ENCODE measurements at regions of chr1 and their contacts with region 1.

Region 1: GRCh38 chr1:108746372-108747205 is at the start of gene STXBP3:
- DNase-seq: peak; percentile 100
- ATAC-seq: peak; percentile 94
- H3K4me3 Mint-ChIP-seq: peak within 1 kb of the TSS; percentile 96
- H3K27ac Mint-ChIP-seq: peak within 1 kb of the TSS; percentile 99
- H3K4me1 Mint-ChIP-seq: peaks cover 29% of the 10 kb centered on the region
- H3K27me3 Mint-ChIP-seq: no peaks in the 10 kb centered on the region
- total RNA-seq, gene STXBP3: 38.9 to 39.3 TPM

Region 2: GRCh38 chr1:108512239-108512981 is 234.2 kb before region 1 on chr1:
- CTCF ChIA-PET with region 1: no interaction called
- POLR2A ChIA-PET with region 1: no interaction called
- intact Hi-C with region 1: loop called in 1 of 2 experiments (anchors 2 kb)
- DNase-seq: no peak
- ATAC-seq: no peak
- H3K4me3 Mint-ChIP-seq: no peak overlapping the region
- H3K27ac Mint-ChIP-seq: no peak overlapping the region
- H3K4me1 Mint-ChIP-seq: no peaks in the 10 kb centered on the region
- H3K27me3 Mint-ChIP-seq: peaks cover 22% of the 10 kb centered on the region

Region 3: DNA sequence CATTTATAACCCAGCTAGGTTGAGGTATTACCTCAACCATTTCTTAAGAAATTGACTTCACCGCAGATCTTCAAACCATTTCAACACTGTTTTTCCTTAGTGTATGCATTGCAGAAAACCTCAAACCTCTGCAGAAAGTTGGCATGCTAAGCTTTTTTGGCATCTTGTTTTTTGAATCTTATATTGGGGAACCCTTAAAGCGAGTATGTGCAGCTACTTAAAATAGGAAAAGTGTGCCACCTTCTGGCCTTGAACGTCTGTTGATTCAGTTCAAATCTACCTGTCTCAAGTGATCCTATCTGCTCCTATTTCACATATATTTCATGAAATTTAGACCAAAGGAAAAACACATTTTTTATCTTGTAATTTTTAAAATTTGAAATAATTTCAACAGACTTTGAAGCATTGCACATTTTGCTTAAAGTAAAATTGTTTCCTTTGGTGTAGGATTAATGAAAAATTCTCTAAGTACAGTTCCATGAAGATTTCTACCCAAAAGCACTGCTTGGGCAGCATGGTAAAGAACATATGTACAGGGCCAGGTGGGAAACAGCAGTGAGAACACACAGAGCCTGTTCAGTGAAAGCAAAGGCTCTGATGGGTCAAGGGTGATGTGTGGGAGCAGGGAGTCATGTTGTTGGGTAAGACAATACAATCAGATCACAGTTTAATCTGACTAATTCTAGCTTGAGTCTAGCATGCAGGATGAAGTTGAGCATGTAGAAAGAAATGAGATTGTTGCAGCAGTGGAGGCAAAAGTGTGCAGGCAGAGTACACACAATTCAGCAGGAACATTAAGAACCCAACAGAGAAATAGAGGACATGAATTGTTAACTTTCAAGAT is 102.9 kb before region 1 on chr1:
- CTCF ChIA-PET with region 1: no interaction called
- POLR2A ChIA-PET with region 1: no interaction called
- intact Hi-C with region 1: loop called in 1 of 2 experiments (anchors 5 kb)
- DNase-seq: peak; percentile 64
- ATAC-seq: peak; percentile 47
- H3K4me3 Mint-ChIP-seq: no peak overlapping the region
- H3K27ac Mint-ChIP-seq: peak overlapping the region; percentile 72
- H3K4me1 Mint-ChIP-seq: peaks cover 71% of the 10 kb centered on the region
- H3K27me3 Mint-ChIP-seq: no peaks in the 10 kb centered on the region

Region 4: DNA sequence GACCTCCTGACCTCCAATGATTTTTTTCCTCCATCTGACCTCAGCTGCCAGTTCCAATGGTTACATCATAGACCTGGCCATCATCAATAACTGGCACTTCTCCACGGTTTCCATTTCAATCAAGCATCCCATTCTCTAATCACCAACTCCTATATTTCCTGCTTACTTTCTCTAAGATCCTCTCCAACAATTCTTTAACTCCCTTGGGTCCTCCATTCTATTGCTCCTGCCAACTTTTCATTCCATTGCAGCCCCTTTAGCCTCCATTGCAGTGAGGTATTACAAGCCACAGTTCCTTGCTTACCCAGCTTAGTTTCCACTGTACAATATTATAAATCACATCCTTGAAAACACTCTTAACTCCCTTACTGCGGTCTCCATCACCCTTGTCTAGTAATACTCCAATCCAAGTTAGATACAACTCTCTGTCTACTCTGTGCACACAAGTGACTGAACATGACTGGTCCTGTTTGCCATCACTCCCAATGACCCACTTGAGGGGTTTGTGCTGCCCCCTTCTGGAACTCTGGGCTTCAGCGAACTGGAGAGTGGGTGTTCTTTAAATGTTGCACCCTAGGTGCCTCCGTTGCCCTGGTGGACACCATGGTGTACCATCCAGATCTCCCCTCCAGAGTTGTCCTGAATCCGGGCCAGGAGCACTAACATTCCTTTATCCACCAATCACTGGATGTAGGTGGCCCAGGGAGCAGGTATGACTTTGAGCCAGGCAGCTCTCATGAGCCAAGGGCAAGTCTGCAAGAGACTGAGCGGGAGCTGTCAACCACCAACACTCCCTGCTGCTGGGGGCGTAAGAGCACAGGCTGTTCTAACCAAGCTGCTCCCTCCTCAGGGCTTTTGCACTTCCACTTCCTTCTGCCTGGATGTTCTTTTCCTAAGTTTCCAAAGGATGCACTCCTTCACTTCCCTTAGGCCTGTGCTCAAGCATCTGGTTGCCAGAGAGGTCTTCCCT is 37.6 kb before region 1 on chr1:
- CTCF ChIA-PET with region 1: interaction called, 3 read pairs
- POLR2A ChIA-PET with region 1: no interaction called
- intact Hi-C with region 1: loop called (anchors 1 to 2 kb)
- DNase-seq: peak; percentile 78
- ATAC-seq: peak; percentile 86
- H3K4me3 Mint-ChIP-seq: no peak overlapping the region
- H3K27ac Mint-ChIP-seq: no peak overlapping the region
- H3K4me1 Mint-ChIP-seq: peaks cover 25% of the 10 kb centered on the region
- H3K27me3 Mint-ChIP-seq: no peaks in the 10 kb centered on the region

Region 5: GRCh38 chr1:108963052-108963686 is 216.6 kb after region 1 on chr1 and contains the start of gene CLCC1:
- CTCF ChIA-PET with region 1: no interaction called
- POLR2A ChIA-PET with region 1: no interaction called
- intact Hi-C with region 1: loop called in 1 of 2 experiments (anchors 2 kb)
- DNase-seq: peak; percentile 96
- ATAC-seq: peak; percentile 97
- H3K4me3 Mint-ChIP-seq: peak within 1 kb of the TSS; percentile 81
- H3K27ac Mint-ChIP-seq: peak within 1 kb of the TSS; percentile 91
- H3K4me1 Mint-ChIP-seq: peaks cover 26% of the 10 kb centered on the region
- H3K27me3 Mint-ChIP-seq: no peaks in the 10 kb centered on the region
- total RNA-seq, gene CLCC1: 15.7 to 17.1 TPM

Region 6: DNA sequence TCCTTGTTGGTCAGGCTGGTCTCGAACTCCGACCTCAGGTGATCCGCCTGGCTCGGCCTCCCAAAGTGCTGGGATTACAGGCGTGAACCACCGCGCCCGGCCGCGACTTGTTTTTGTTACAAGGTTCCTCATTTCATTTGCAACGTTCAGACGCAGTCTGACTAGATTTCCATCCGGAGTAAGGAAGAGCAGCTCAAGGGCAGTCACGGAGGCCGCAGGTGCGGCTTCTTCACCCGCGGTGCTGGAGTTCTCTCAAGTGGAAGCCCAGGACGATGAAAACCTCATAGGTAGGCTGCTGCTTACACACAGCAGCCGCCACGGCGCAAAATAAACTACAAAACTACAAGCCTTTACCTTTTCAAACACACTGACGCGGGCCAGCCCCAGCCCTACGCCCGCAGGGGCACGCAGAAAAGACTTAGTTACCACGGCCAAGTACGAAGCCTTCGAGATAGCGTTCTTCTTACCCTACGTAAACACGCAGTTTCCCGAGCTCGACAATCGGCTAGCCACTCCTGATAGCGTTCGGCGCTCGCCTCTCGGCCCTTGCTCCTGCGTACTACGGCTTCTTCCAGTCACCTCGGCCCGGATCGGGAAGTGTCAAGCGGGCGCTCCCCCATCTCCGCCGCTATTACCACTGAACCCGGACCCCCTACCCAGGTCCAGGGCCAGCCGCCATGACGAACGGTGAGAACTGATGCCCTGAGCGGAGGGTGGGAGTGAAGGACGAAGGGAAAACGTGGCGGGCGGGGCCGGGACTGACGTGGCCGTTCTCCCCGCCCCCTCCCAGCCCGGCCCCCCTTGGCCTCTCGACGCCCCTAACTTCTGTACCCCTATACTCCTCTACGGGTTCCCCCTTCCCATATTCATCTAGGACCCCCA is 343.8 kb after region 1 on chr1 and contains the start of gene TMEM167B:
- CTCF ChIA-PET with region 1: no interaction called
- POLR2A ChIA-PET with region 1: no interaction called
- intact Hi-C with region 1: loop called (anchors 2 to 5 kb)
- DNase-seq: peak; percentile 95
- ATAC-seq: peak; percentile 88
- H3K4me3 Mint-ChIP-seq: peak within 1 kb of the TSS; percentile 85
- H3K27ac Mint-ChIP-seq: peak within 1 kb of the TSS; percentile 84
- H3K4me1 Mint-ChIP-seq: peaks cover 30% of the 10 kb centered on the region
- H3K27me3 Mint-ChIP-seq: no peaks in the 10 kb centered on the region
- total RNA-seq, gene TMEM167B: 26.8 to 28.4 TPM

Region 7: DNA sequence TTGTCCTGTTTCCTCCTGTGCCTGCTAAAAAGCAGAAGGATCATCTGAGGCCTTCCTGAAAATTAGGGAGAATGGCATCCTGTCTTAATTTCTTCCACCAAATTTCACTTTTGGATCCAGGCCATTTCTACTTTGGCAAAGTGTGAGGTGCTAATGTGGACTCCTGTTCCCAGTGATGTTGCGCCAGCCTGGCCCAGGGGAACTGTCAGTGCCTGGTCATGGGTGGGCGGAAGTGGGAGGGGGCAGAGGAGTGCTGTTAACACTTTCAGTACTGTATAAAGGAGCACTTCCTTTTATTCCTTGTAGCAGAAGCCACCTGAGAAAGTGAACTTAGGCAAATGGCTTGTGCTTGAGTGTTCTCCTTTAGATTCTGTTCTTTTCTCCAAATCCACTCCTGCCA is 387.2 kb after region 1 on chr1:
- CTCF ChIA-PET with region 1: no interaction called
- POLR2A ChIA-PET with region 1: no interaction called
- intact Hi-C with region 1: no loop called
- DNase-seq: peak; percentile 38
- ATAC-seq: no peak
- H3K4me3 Mint-ChIP-seq: no peak overlapping the region
- H3K27ac Mint-ChIP-seq: peak overlapping the region; percentile 22
- H3K4me1 Mint-ChIP-seq: peaks cover 27% of the 10 kb centered on the region
- H3K27me3 Mint-ChIP-seq: no peaks in the 10 kb centered on the region

Region 8: GRCh38 chr1:109483672-109484518 is 737.3 kb after region 1 on chr1 and contains the start of gene ATXN7L2:
- CTCF ChIA-PET with region 1: no interaction called
- POLR2A ChIA-PET with region 1: no interaction called
- intact Hi-C with region 1: loop called in 1 of 2 experiments (anchors 5 kb)
- DNase-seq: peak; percentile 96
- ATAC-seq: peak; percentile 79
- H3K4me3 Mint-ChIP-seq: peak within 1 kb of the TSS; percentile 88
- H3K27ac Mint-ChIP-seq: peak within 1 kb of the TSS; percentile 96
- H3K4me1 Mint-ChIP-seq: peaks cover 33% of the 10 kb centered on the region
- H3K27me3 Mint-ChIP-seq: no peaks in the 10 kb centered on the region
- total RNA-seq, gene ATXN7L2: 11.7 to 13.0 TPM

Measured in activated CD4-positive, alpha-beta T cell treated with anti-CD3 and anti-CD28 coated beads for 36 hours (primary cell).